Mammary epithelial cell (primary cell): ENCODE measurements at regions of chr20 and their contacts with region 1.

Region 1: DNA sequence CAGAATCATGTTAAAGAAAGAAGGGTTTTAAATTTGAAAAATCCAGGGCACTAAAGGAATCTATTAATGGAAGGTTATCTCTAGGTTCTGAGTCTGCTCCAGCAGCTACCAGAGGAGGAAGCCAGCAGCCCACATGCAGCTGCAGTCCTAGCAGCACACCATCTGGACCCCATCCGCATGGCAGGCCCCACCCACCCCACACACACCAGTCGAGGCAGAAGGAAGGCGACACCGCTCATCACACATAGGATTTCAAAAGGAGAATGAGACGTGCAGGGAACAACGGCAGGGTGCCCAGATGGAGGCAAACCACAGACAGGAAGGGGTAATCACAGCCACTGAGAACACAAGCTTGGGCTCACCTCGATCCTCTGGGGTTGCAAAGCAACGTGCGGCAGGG is 78.9 kb downstream of the GINS1 start:
- DNase-seq: no peak
- H3K4me3 ChIP-seq: no peak overlapping the region
- H3K27ac ChIP-seq: no peak overlapping the region
- H3K4me1 ChIP-seq: peaks cover 45% of the 10 kb centered on the region
- H3K27me3 ChIP-seq: no peaks in the 10 kb centered on the region
- CTCF ChIP-seq: no peak

Region 2: GRCh38 chr20:25521382-25521781 is 35.0 kb after region 1 on chr20:
- CTCF ChIA-PET with region 1: no interaction called
- dilution Hi-C with region 1: no loop called
- in situ Hi-C with region 1: no loop called
- intact Hi-C with region 1: loop called (anchors 5 kb)
- DNase-seq: no peak
- H3K4me3 ChIP-seq: no peak overlapping the region
- H3K27ac ChIP-seq: no peak overlapping the region
- H3K4me1 ChIP-seq: peaks cover 10% of the 10 kb centered on the region
- H3K27me3 ChIP-seq: no peaks in the 10 kb centered on the region
- CTCF ChIP-seq: no peak